Activated CD4-positive, alpha-beta memory T cell treated with anti-CD3 and anti-CD28 coated beads, Interleukin-2, amount 10 ng/mL, durations not matched to agents 7 days and 5 days (primary cell): ENCODE measurements at regions of chr15 and their contacts with region 1.

Region 1: GRCh38 chr15:49155110-49155833 is at the start of gene COPS2:
- DNase-seq: peak; percentile 96
- H3K4me3 Mint-ChIP-seq: peak within 1 kb of the TSS; percentile 98
- H3K27ac Mint-ChIP-seq: peak within 1 kb of the TSS; percentile 93
- H3K4me1 Mint-ChIP-seq: peaks cover 54% of the 10 kb centered on the region
- H3K27me3 Mint-ChIP-seq: no peaks in the 10 kb centered on the region
- total RNA-seq, gene COPS2: 62.6 to 68.7 TPM

Region 2: DNA sequence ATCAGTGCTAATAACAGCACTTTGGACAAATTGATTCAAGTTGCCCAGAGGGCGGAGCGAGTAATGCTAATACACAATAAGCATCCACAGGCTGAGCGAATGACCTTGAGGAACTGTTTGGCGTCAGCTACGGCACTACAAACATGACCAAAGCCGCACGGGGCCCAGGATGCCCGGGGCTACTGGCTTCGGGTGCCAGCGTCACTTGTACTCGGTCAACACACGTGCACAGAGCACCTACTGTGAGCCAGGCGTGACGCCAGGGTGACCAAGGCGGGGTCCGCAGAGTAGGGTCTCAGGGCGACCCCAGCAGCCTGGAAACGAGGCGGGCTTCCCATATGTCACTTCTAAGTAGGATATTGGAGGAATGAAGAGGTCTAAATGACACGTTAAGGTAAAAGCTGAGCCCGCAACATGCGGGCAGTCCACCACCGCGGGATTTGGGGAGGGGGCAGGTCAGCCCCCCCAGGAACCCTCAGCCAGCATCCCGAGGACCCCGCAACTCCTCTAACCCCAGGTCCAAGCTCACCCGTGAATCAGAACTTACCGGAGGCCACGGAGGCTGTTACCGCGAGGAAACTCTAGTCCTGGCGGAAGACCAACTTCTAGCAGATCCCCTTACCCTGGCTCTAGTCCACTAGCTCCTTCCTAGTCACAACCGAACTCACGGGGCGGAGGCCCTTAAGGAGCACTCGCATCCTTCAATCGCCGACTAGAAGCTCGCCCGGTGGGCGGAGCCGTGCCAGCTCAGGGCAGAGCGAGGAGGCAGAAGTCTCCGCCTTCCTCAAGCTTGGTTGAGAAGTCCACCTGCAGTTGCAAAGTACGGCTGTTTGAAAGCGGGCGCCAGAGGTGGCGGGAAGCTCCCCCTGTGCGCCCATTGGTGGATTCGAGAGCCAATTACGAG is 344.6 kb before region 1 on chr15 and contains the start of gene CEP152:
- CTCF ChIA-PET with region 1: interaction called, 4 read pairs
- POLR2A ChIA-PET with region 1: interaction called, 20 read pairs
- DNase-seq: peak; percentile 99
- H3K4me3 Mint-ChIP-seq: peak within 1 kb of the TSS; percentile 84
- H3K27ac Mint-ChIP-seq: peak within 1 kb of the TSS; percentile 93
- H3K4me1 Mint-ChIP-seq: peaks cover 41% of the 10 kb centered on the region
- H3K27me3 Mint-ChIP-seq: peaks cover 15% of the 10 kb centered on the region
- total RNA-seq, gene CEP152: 41.5 to 43.1 TPM

Region 3: GRCh38 chr15:49046220-49047102 is 108.8 kb before region 1 on chr15 and contains the start of gene SECISBP2L:
- CTCF ChIA-PET with region 1: interaction called, 3 read pairs
- POLR2A ChIA-PET with region 1: interaction called, 11 read pairs
- DNase-seq: peak; percentile 93
- H3K4me3 Mint-ChIP-seq: peak within 1 kb of the TSS; percentile 95
- H3K27ac Mint-ChIP-seq: peak within 1 kb of the TSS; percentile 80
- H3K4me1 Mint-ChIP-seq: peaks cover 26% of the 10 kb centered on the region
- H3K27me3 Mint-ChIP-seq: no peaks in the 10 kb centered on the region
- total RNA-seq, gene SECISBP2L: 35.7 to 36.9 TPM

Region 4: GRCh38 chr15:49096090-49096750 is 59.1 kb before region 1 on chr15:
- CTCF ChIA-PET with region 1: no interaction called
- POLR2A ChIA-PET with region 1: no interaction called
- DNase-seq: no peak
- H3K4me3 Mint-ChIP-seq: no peak overlapping the region
- H3K27ac Mint-ChIP-seq: no peak overlapping the region
- H3K4me1 Mint-ChIP-seq: no peaks in the 10 kb centered on the region
- H3K27me3 Mint-ChIP-seq: no peaks in the 10 kb centered on the region

Region 5: GRCh38 chr15:49135893-49136292 is 19.4 kb before region 1 on chr15:
- CTCF ChIA-PET with region 1: interaction called, 6 read pairs
- POLR2A ChIA-PET with region 1: interaction called, 10 read pairs
- DNase-seq: no peak
- H3K4me3 Mint-ChIP-seq: no peak overlapping the region
- H3K27ac Mint-ChIP-seq: no peak overlapping the region
- H3K4me1 Mint-ChIP-seq: peaks cover 20% of the 10 kb centered on the region
- H3K27me3 Mint-ChIP-seq: no peaks in the 10 kb centered on the region

Region 6: GRCh38 chr15:49169880-49170597 is 14.8 kb after region 1 on chr15 and contains the start of gene GALK2:
- CTCF ChIA-PET with region 1: interaction called, 21 read pairs
- POLR2A ChIA-PET with region 1: interaction called, 75 read pairs
- DNase-seq: peak; percentile 88
- H3K4me3 Mint-ChIP-seq: peak within 1 kb of the TSS; percentile 92
- H3K27ac Mint-ChIP-seq: peak within 1 kb of the TSS; percentile 92
- H3K4me1 Mint-ChIP-seq: peaks cover 35% of the 10 kb centered on the region
- H3K27me3 Mint-ChIP-seq: no peaks in the 10 kb centered on the region
- total RNA-seq, gene GALK2: 30.0 to 31.5 TPM